H1 (cell line): ENCODE measurements at regions of chr17 and their contacts with region 1.

Region 1: GRCh38 chr17:82022981-82023374 is at the start of gene LRRC45:
- DNase-seq: peak; percentile 98 to 99
- H3K4me3 ChIP-seq: peak within 1 kb of the TSS; percentile 83 to 93 (median 86)
- H3K27ac ChIP-seq: peak within 1 kb of the TSS; percentile 46; the same call in 1 of the 2 replicates
- H3K4me1 ChIP-seq: peaks cover 0 to 14% (median 8%) of the 10 kb centered on the region in 4 experiments; a peak in 5 of 7 replicates
- H3K27me3 ChIP-seq: no peaks in the 10 kb centered on the region
- CTCF ChIP-seq: no peak
- EP300 ChIP-seq: no peak
- POLR2A ChIP-seq: no peak
- RAD21 ChIP-seq: no peak
- total RNA-seq, gene LRRC45: 28.2 and 29.0 TPM in 2 replicates

Region 2: GRCh38 chr17:81927653-81928543 is 95.1 kb before region 1 on chr17 and contains the start of gene MAFG:
- CTCF ChIA-PET with region 1: interaction called, 12 read pairs
- POLR2A ChIA-PET with region 1: interaction called, 7 read pairs
- DNase-seq: peak; percentile 70 to 95
- H3K4me3 ChIP-seq: peak within 1 kb of the TSS; percentile 67 to 89 (median 70)
- H3K27ac ChIP-seq: peak within 1 kb of the TSS; percentile 72
- H3K4me1 ChIP-seq: peaks cover 0 to 37% (median 28%) of the 10 kb centered on the region in 4 experiments; a peak in 6 of 7 replicates
- H3K27me3 ChIP-seq: peaks cover 0 to 12% (median 9%) of the 10 kb centered on the region in 4 experiments; a peak in 4 of 7 replicates
- CTCF ChIP-seq: peak; percentile 60 to 65 (median 63)
- EP300 ChIP-seq: peak in 1 of 2 experiments; percentile 22; a peak in 1 of 3 replicates
- POLR2A ChIP-seq: no peak
- RAD21 ChIP-seq: peak; percentile 42 to 69
- total RNA-seq, gene MAFG: 26.9 and 27.7 TPM in 2 replicates

Region 3: DNA sequence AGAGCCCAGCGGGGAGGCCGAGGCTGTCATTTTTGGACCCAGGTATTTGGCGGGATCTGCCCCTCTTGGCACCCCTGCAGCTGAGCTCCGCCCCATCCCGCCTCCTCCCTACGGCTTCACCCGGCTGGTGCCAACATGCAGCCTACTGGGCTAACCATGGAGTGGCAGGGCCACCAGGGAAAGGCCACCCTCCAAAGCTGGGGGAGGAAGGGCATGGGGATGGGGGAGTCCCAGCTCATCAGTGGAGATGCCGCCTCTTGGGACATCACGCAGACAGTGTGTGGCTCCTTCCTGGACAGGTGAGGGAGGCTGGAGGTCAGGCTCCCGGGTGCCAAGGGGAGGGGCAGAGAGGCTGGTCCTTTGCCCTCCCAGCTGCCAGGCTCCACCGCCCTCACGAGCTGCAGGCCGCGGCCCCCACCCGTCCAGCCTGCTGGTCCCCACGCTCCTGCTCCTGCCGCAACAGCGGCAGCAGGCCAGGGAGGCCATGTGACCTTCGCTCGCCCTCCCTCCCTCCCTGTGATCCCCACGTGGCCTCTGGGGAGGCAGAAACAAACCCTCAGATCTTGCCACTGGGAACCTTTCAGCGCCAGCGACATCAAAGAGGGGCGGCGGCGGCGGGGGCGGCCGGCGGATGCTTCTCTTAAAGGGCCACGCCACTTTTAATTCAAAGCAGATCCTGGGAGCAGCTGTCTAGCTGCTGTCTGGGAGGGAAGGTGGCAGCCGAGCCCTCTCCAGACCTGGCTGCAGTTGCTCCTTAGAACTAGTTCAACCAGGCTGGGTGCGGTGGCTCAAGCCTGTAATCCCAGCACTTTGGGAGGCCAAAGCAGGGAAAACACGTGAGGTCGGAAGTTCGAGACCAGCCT is 55.2 kb before region 1 on chr17:
- CTCF ChIA-PET with region 1: interaction called, 16 read pairs
- POLR2A ChIA-PET with region 1: interaction called, 3 read pairs
- DNase-seq: peak; percentile 43 to 81
- H3K4me3 ChIP-seq: peak overlapping the region in 1 of 4 experiments; percentile 40; a peak in 1 of 8 replicates
- H3K27ac ChIP-seq: no peak overlapping the region
- H3K4me1 ChIP-seq: peaks cover 0 to 19% (median 16%) of the 10 kb centered on the region in 4 experiments; a peak in 6 of 7 replicates
- H3K27me3 ChIP-seq: peaks cover 0 to 43% (median 35%) of the 10 kb centered on the region in 4 experiments; a peak in 6 of 7 replicates
- CTCF ChIP-seq: no peak
- EP300 ChIP-seq: peak in 1 of 2 experiments; percentile 43; a peak in 1 of 3 replicates
- POLR2A ChIP-seq: no peak
- RAD21 ChIP-seq: no peak

Region 4: DNA sequence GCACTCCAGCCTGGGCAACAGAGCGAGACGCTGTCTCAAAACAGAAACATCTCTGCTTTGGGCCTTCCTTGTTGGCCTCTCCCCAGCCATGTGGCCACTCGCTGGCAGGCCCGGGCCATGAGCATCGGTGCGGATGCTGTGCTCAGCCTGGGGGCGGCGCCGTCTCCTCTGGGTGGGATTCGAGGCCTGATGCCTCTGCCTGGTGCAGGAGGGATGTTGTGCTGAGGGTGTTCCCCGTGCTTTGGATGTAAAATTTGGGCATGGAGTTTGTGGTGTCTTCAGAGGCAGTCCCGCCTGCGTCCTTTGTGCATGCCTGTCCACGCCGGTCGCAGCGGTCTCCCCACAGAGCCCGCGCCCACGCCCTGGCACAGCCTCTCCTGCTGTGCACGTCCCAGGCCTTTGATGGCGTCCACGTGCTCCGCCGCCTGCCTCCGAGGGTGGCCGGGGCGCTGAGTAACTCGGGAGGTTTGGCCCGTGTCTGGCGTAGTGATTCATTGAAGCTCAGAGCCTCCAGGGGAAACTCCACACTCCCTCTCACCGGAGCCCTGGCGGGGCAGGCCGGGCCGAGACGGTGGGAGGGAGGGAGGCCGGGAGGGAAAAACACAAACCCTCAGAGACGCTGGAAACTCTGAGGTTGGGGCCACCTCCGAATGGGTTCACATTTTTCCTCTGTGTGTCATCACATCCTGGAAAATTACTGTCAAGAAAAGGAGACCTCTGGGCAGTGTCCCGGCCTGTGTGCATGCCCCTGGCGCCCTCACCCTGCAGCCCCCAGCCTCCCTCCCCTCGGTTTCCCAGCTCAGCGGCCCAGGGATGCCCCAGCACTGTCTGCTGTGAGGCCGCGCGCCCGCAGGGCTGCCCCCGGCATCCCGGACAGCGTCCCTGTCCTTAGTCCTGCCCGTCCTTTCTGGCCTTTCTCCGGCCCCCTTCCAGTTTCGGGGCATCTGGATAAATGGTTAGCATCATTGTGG is 19.3 kb before region 1 on chr17:
- CTCF ChIA-PET with region 1: interaction called, 29 read pairs
- POLR2A ChIA-PET with region 1: interaction called, 13 read pairs
- DNase-seq: peak in 1 of 2 experiments; percentile 51
- H3K4me3 ChIP-seq: no peak overlapping the region
- H3K27ac ChIP-seq: no peak overlapping the region
- H3K4me1 ChIP-seq: peaks cover 0 to 1% (median 0%) of the 10 kb centered on the region in 4 experiments; a peak in 1 of 7 replicates
- H3K27me3 ChIP-seq: no peaks in the 10 kb centered on the region
- CTCF ChIP-seq: peak in 2 of 3 experiments; percentile 14 to 35; a peak in 3 of 4 replicates
- EP300 ChIP-seq: no peak
- POLR2A ChIP-seq: no peak
- RAD21 ChIP-seq: no peak; a peak in 1 of 4 replicates

Region 5: GRCh38 chr17:82051776-82052637 is 29.0 kb after region 1 on chr17 and contains the starts of genes GPS1 and RFNG:
- CTCF ChIA-PET with region 1: interaction called, 4 read pairs
- POLR2A ChIA-PET with region 1: interaction called, 38 read pairs
- DNase-seq: peak in 1 of 2 experiments; percentile 86
- H3K4me3 ChIP-seq: peak within 1 kb of the TSS; percentile 72 to 94 (median 86)
- H3K27ac ChIP-seq: no peak within 1 kb of the TSS
- H3K4me1 ChIP-seq: peaks cover 0 to 11% (median 6%) of the 10 kb centered on the region in 4 experiments; a peak in 5 of 7 replicates
- H3K27me3 ChIP-seq: no peaks in the 10 kb centered on the region; a peak in 1 of 7 replicates
- CTCF ChIP-seq: no peak
- EP300 ChIP-seq: no peak
- POLR2A ChIP-seq: no peak; a peak in 1 of 3 replicates
- RAD21 ChIP-seq: no peak
- total RNA-seq, gene GPS1: 153 and 157 TPM in 2 replicates
- total RNA-seq, gene RFNG: 26.7 and 30.9 TPM in 2 replicates